ENCODE measurements at regions of chr10 and their contacts with region 1.

Region 1: DNA sequence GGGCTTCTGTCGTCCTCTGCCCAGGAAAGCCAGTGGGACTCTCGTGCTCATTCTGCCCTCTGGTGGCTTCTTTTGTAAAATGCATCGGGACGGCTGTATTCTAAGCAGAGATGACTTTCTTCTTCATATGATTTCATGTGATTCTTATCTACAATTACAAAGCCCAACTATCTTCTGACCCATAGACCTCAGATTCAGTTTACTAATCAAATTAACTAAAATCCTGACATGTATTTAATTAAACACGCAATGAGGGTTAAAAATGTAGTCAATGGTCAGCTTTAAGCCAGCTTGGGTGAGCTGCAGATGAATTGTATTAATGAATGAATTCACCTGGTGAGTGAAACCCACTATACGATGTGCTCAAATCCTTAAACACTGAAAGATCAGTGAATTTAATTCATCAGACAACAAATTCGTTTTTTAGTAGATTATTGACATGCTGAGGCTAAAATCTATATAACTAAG is 117.6 kb upstream of the FAM204A start:
- DNase-seq: no peak
- ATAC-seq: peak; percentile 94
- H3K4me3 ChIP-seq: no peak overlapping the region
- H3K27ac ChIP-seq: no peak overlapping the region
- H3K4me1 ChIP-seq: no peaks in the 10 kb centered on the region
- H3K27me3 ChIP-seq: peaks cover 0 to 3% of the 10 kb centered on the region in 2 experiments; a peak in 3 of 4 replicates
- CTCF ChIP-seq: peak; percentile 65 to 81 (median 75)
- EP300 ChIP-seq: no peak
- POLR2A ChIP-seq: no peak
- RAD21 ChIP-seq: peak; percentile 65

Region 2: GRCh38 chr10:118259288-118259906 is 200.4 kb before region 1 on chr10:
- CTCF ChIA-PET with region 1: interaction called, 10 read pairs
- POLR2A ChIA-PET with region 1: no interaction called
- RAD21 ChIA-PET with region 1: interaction called, 6 read pairs
- SMC1A ChIA-PET with region 1: interaction called, 9 read pairs
- in situ Hi-C with region 1: no loop called
- intact Hi-C with region 1: no loop called
- DNase-seq: no peak
- ATAC-seq: peak; percentile 79
- H3K4me3 ChIP-seq: no peak overlapping the region
- H3K27ac ChIP-seq: no peak overlapping the region
- H3K4me1 ChIP-seq: no peaks in the 10 kb centered on the region
- H3K27me3 ChIP-seq: peaks cover 0 to 1% of the 10 kb centered on the region in 2 experiments; a peak in 2 of 4 replicates
- CTCF ChIP-seq: peak; percentile 60 to 65 (median 62)
- EP300 ChIP-seq: no peak
- POLR2A ChIP-seq: no peak
- RAD21 ChIP-seq: peak; percentile 32

Region 3: GRCh38 chr10:118339111-118339510 is 120.6 kb before region 1 on chr10:
- CTCF ChIA-PET with region 1: interaction called, 14 read pairs
- POLR2A ChIA-PET with region 1: no interaction called
- RAD21 ChIA-PET with region 1: no interaction called
- SMC1A ChIA-PET with region 1: no interaction called
- in situ Hi-C with region 1: no loop called
- intact Hi-C with region 1: no loop called
- DNase-seq: no peak
- ATAC-seq: no peak
- H3K4me3 ChIP-seq: peak overlapping the region; percentile 19; the same call in 1 of the 2 replicates
- H3K27ac ChIP-seq: no peak overlapping the region
- H3K4me1 ChIP-seq: no peaks in the 10 kb centered on the region
- H3K27me3 ChIP-seq: no peaks in the 10 kb centered on the region
- CTCF ChIP-seq: no peak
- EP300 ChIP-seq: no peak
- POLR2A ChIP-seq: no peak
- RAD21 ChIP-seq: no peak

Region 4: GRCh38 chr10:118430190-118430589 is 29.6 kb before region 1 on chr10:
- CTCF ChIA-PET with region 1: interaction called, 7 read pairs
- POLR2A ChIA-PET with region 1: no interaction called
- RAD21 ChIA-PET with region 1: interaction called, 4 read pairs
- SMC1A ChIA-PET with region 1: interaction called, 10 read pairs
- in situ Hi-C with region 1: no loop called
- intact Hi-C with region 1: no loop called
- DNase-seq: no peak
- ATAC-seq: no peak
- H3K4me3 ChIP-seq: no peak overlapping the region
- H3K27ac ChIP-seq: no peak overlapping the region
- H3K4me1 ChIP-seq: no peaks in the 10 kb centered on the region
- H3K27me3 ChIP-seq: no peaks in the 10 kb centered on the region
- CTCF ChIP-seq: no peak
- EP300 ChIP-seq: no peak
- POLR2A ChIP-seq: no peak
- RAD21 ChIP-seq: no peak

Region 5: GRCh38 chr10:118471863-118472262 is 12.1 kb after region 1 on chr10:
- CTCF ChIA-PET with region 1: interaction called, 19 read pairs
- POLR2A ChIA-PET with region 1: no interaction called
- RAD21 ChIA-PET with region 1: no interaction called
- SMC1A ChIA-PET with region 1: interaction called, 3 read pairs
- in situ Hi-C with region 1: no loop called
- intact Hi-C with region 1: no loop called
- DNase-seq: no peak
- ATAC-seq: no peak
- H3K4me3 ChIP-seq: no peak overlapping the region
- H3K27ac ChIP-seq: no peak overlapping the region
- H3K4me1 ChIP-seq: no peaks in the 10 kb centered on the region
- H3K27me3 ChIP-seq: peaks cover 0 to 2% of the 10 kb centered on the region in 2 experiments; a peak in 1 of 4 replicates
- CTCF ChIP-seq: no peak
- EP300 ChIP-seq: no peak
- POLR2A ChIP-seq: no peak
- RAD21 ChIP-seq: no peak

Measured in GM12878 (cell line).